CD14-positive monocyte (primary cell): ENCODE measurements at regions of chr2 and their contacts with region 1.

Region 1: DNA sequence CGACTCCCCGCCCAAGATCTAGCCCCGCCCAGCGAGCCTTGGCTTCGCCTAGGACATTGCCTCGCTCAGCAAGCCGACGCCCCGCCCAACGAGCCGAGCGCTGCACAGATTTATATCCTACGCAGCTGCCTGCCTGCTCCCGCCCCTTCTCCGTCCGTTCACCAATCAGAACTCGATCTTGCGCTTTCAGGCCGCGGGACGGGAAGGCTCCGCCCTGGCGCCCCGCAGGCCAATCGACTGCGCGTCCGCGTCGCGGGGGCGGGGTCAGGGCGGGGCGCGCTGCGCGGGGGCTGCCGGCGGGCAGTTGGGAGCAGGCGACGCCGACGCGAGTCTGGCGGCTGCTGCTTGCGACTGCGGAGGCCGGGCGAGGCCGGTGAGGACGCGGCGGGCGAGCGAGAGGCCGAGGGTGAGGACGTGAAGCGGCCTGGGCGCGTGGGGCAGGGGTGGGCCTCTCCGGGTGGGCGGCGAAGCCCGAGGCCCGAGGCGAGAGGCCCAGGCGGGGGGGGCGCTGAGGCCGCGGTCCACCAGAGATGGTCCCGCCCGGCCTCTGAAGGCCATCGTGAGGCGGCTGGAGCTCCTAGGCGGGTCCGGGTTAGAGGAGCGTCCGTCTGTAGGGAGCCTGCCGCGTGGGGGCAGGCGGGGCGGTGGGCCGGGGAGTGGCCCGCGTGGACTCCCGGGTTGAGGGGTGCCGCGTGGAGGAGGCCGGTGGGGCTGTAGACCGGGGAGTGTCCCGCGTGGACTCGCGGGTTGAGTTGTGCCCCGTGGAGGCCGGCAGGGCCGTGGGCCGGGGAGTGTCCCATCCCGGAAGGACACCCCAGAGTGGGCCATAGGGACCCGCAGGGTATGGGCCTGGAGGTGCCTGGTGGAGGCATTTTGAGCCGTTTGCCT is at the start of gene FARP2:
- DNase-seq: peak; percentile 96 to 98 (median 98)
- H3K4me3 ChIP-seq: peak within 1 kb of the TSS; percentile 48 to 82 (median 77)
- H3K4me3 Mint-ChIP-seq: peak within 1 kb of the TSS; percentile 80 to 89
- H3K27ac ChIP-seq: peak within 1 kb of the TSS; percentile 44 to 73
- H3K27ac Mint-ChIP-seq: peak within 1 kb of the TSS; percentile 87 to 95 (median 94)
- H3K4me1 ChIP-seq: peaks cover 29 to 33% of the 10 kb centered on the region in 2 donors
- H3K4me1 Mint-ChIP-seq: peaks cover 35% of the 10 kb centered on the region
- H3K27me3 ChIP-seq: no peaks in the 10 kb centered on the region
- H3K27me3 Mint-ChIP-seq: peaks cover 0 to 4% (median 0%) of the 10 kb centered on the region in 3 donors
- CTCF ChIP-seq: no peak
- polyA plus RNA-seq, gene FARP2: 6.7 to 8.5 (median 7.3) TPM

Region 2: DNA sequence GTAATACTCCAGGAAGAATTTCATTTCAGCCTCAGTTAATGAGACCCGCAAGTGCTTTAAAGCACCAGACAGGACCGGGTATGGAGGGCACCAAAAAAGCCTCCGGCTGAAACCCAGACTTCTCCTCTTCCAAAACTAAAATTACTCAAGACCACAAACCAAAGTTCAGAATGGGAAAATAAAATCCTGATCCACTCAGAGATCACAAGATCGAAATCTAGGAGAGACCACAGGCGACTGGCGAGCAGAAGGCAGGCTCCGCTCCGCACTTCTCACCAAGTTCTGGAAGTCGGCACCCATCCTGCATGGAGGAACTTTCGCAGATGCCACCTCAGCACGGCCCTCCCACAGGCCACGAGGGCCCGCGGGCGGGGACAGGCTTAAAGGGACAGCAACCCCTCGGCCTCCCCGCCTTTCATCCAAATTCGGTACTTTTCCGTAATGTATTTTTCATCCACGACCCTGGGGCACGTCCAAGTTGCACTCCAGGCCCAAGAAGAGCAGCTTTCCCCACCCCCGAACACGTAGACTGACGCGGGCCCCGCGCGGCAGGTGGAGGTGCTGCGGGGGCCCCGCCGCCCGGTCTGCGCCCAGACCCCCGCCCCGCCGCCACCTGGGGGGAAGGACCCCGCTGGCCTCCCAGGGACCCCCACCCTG is 84.5 kb before region 1 on chr2:
- intact Hi-C with region 1: loop called in 1 of 2 experiments (anchors 10 kb)
- DNase-seq: peak; percentile 48 to 56 (median 49)
- H3K4me3 ChIP-seq: peak overlapping the region; percentile 76 to 88 (median 77)
- H3K4me3 Mint-ChIP-seq: peak overlapping the region; percentile 97 to 98
- H3K27ac ChIP-seq: peak overlapping the region; percentile 29 to 78
- H3K27ac Mint-ChIP-seq: peak overlapping the region; percentile 88 to 96 (median 94)
- H3K4me1 ChIP-seq: peaks cover 18 to 29% of the 10 kb centered on the region in 2 donors
- H3K4me1 Mint-ChIP-seq: peaks cover 48% of the 10 kb centered on the region
- H3K27me3 ChIP-seq: no peaks in the 10 kb centered on the region
- H3K27me3 Mint-ChIP-seq: peaks cover 1 to 3% (median 2%) of the 10 kb centered on the region in 3 donors
- CTCF ChIP-seq: no peak

Region 3: GRCh38 chr2:241508240-241509154 is 152.3 kb after region 1 on chr2 and contains the start of gene STK25:
- intact Hi-C with region 1: loop called in 1 of 2 experiments (anchors 5 kb)
- DNase-seq: peak; percentile 89 to 94 (median 94)
- H3K4me3 ChIP-seq: peak within 1 kb of the TSS; percentile 51 to 87 (median 81)
- H3K4me3 Mint-ChIP-seq: peak within 1 kb of the TSS; percentile 81 to 89
- H3K27ac ChIP-seq: peak within 1 kb of the TSS in 1 of 2 donors; percentile 65
- H3K27ac Mint-ChIP-seq: peak within 1 kb of the TSS in 3 of 7 donors; percentile 40 to 86 (median 41)
- H3K4me1 ChIP-seq: peaks cover 17 to 19% of the 10 kb centered on the region in 2 donors
- H3K4me1 Mint-ChIP-seq: peaks cover 23% of the 10 kb centered on the region
- H3K27me3 ChIP-seq: peaks cover 0 to 20% of the 10 kb centered on the region in 2 donors
- H3K27me3 Mint-ChIP-seq: peaks cover 26 to 35% (median 27%) of the 10 kb centered on the region in 3 donors
- CTCF ChIP-seq: peak; percentile 48
- polyA plus RNA-seq, gene STK25: 62.7 to 215 (median 69.5) TPM

Region 4: GRCh38 chr2:241702132-241703031 is 346.2 kb after region 1 on chr2:
- intact Hi-C with region 1: loop called in 1 of 2 experiments (anchors 2 kb)
- DNase-seq: peak; percentile 51 to 73 (median 62)
- H3K4me3 ChIP-seq: peak overlapping the region; percentile 38 to 86 (median 65)
- H3K4me3 Mint-ChIP-seq: peak overlapping the region; percentile 78 to 80
- H3K27ac ChIP-seq: peak overlapping the region; percentile 68 to 79
- H3K27ac Mint-ChIP-seq: peak overlapping the region in 4 of 7 donors; percentile 27 to 41 (median 34)
- H3K4me1 ChIP-seq: peaks cover 15 to 22% of the 10 kb centered on the region in 2 donors
- H3K4me1 Mint-ChIP-seq: peaks cover 16% of the 10 kb centered on the region
- H3K27me3 ChIP-seq: no peaks in the 10 kb centered on the region
- H3K27me3 Mint-ChIP-seq: peaks cover 0 to 8% (median 0%) of the 10 kb centered on the region in 3 donors
- CTCF ChIP-seq: no peak